IMR-90 (cell line): ENCODE measurements at regions of chr21 and their contacts with region 1.

Region 1: GRCh38 chr21:16851054-16851453 is 661.8 kb upstream of the CXADR start:
- DNase-seq: no peak
- ATAC-seq: no peak
- H3K4me3 ChIP-seq: no peak overlapping the region
- H3K27ac ChIP-seq: no peak overlapping the region
- H3K4me1 ChIP-seq: no peaks in the 10 kb centered on the region
- H3K27me3 ChIP-seq: no peaks in the 10 kb centered on the region
- CTCF ChIP-seq: no peak
- POLR2A ChIP-seq: no peak
- RAD21 ChIP-seq: no peak

Region 2: DNA sequence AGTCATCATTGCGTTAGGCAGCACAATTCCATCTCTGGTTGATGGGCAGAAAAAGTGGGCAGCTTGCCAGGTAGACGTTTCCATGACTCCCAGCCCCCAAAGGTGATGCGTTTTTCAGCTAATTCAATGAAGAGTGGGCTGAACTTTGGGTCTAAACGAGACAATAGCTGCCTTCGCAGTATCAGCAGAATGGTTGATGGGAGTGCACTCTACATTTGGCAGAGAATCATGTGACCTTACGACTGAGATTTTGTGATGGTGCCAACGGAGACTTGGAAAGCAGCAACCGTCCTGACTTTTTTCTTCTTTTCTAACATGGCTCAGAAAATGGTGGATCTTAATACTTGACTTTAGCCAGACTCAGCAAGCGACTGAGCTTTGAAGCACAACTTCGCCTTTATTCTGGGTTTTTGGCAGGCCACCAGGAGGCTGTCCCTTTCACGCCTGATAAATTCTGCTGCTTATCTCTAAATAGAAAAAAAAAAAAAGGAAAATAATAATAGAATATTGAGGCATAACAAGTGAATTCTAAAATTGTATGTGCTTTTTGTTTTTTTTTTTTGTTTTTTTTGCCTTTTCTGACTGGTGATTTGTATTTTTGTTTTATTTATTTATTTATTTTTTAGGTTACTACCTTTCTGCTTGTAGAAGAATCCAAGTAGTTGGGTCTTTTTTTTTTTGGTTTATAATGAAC is 316.5 kb before region 1 on chr21:
- CTCF ChIA-PET with region 1: no interaction called
- POLR2A ChIA-PET with region 1: no interaction called
- dilution Hi-C with region 1: no loop called
- in situ Hi-C with region 1: no loop called
- intact Hi-C with region 1: no loop called
- DNase-seq: peak; percentile 32
- ATAC-seq: no peak
- H3K4me3 ChIP-seq: peak overlapping the region; percentile 32
- H3K27ac ChIP-seq: no peak overlapping the region
- H3K4me1 ChIP-seq: peaks cover 3% of the 10 kb centered on the region; the same call in 1 of the 2 replicates
- H3K27me3 ChIP-seq: no peaks in the 10 kb centered on the region
- CTCF ChIP-seq: no peak
- POLR2A ChIP-seq: no peak
- RAD21 ChIP-seq: no peak

Region 3: DNA sequence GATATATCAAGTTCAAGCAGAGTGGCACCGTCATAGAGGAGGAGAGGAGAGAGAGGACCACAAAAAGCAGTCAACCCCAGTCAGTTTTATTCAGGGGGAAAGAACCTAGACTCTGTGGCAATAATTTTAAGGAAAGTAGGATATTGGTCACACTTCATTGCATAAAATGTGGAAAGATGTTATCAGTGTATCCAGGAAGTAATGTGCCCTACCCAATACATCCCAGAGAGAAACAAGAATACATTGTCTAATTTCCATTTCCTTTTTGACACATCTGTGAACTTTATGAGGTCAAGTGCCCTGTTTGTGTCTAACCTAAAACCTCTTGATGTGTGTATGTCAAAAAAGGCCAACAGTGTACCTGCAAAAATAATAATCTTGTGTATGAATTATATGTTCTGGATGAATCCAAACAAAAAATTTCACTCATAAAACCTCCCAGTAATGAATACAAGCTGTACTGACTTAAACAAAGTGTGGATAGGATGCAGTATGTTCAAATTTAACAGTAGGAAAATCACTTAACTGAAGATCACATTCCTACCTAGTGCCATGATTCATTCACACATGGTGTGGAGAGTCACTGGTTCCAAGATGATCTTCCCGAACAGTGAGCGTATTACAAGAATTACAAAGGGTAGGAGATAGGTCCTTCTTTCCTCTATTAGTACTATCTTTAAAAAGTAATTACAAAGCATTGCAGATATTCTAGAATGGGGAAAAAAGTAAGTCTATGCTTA is 50.3 kb before region 1 on chr21:
- CTCF ChIA-PET with region 1: no interaction called
- POLR2A ChIA-PET with region 1: no interaction called
- dilution Hi-C with region 1: no loop called
- in situ Hi-C with region 1: loop called (anchors 5 kb)
- intact Hi-C with region 1: no loop called
- DNase-seq: no peak
- ATAC-seq: no peak
- H3K4me3 ChIP-seq: no peak overlapping the region
- H3K27ac ChIP-seq: no peak overlapping the region
- H3K4me1 ChIP-seq: no peaks in the 10 kb centered on the region
- H3K27me3 ChIP-seq: no peaks in the 10 kb centered on the region
- CTCF ChIP-seq: no peak
- POLR2A ChIP-seq: no peak
- RAD21 ChIP-seq: no peak

Region 4: GRCh38 chr21:16811011-16811410 is 40.0 kb before region 1 on chr21:
- CTCF ChIA-PET with region 1: no interaction called
- POLR2A ChIA-PET with region 1: no interaction called
- dilution Hi-C with region 1: no loop called
- in situ Hi-C with region 1: no loop called
- intact Hi-C with region 1: loop called (anchors 1 kb)
- DNase-seq: no peak
- ATAC-seq: no peak
- H3K4me3 ChIP-seq: no peak overlapping the region
- H3K27ac ChIP-seq: no peak overlapping the region
- H3K4me1 ChIP-seq: no peaks in the 10 kb centered on the region
- H3K27me3 ChIP-seq: no peaks in the 10 kb centered on the region
- CTCF ChIP-seq: no peak
- POLR2A ChIP-seq: no peak
- RAD21 ChIP-seq: no peak